ENCODE measurements at regions of chr5 and their contacts with region 1.

Region 1: DNA sequence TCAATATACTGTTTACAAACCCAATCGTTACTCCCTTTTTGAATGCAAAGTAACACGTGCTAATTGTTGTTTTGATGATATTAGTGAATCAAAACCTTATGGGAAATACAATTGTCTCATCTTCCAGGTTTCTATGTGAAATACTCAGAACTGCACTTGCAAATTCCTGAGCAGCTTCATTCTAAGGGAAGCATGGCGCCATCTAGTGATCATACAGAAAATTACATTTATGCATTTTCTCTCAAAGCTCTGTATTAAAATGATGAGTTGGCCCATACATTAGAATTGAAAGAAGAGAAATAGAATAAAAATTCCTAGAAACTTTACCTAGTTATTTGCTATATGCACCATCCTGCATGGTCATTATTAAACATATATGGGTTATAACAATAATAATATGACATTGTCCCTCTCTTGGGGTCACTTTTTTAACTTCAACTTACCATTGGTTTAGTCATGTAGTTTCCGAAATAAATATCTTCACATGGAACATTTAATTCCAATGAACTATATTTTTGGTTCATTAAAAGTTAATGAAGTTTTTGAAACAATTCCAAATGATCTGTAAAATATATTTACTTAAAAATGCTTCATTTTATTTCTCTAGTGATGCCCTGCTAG is 220.0 kb downstream of the PDE4D start:
- DNase-seq: no peak
- ATAC-seq: peak; percentile 67

Region 2: DNA sequence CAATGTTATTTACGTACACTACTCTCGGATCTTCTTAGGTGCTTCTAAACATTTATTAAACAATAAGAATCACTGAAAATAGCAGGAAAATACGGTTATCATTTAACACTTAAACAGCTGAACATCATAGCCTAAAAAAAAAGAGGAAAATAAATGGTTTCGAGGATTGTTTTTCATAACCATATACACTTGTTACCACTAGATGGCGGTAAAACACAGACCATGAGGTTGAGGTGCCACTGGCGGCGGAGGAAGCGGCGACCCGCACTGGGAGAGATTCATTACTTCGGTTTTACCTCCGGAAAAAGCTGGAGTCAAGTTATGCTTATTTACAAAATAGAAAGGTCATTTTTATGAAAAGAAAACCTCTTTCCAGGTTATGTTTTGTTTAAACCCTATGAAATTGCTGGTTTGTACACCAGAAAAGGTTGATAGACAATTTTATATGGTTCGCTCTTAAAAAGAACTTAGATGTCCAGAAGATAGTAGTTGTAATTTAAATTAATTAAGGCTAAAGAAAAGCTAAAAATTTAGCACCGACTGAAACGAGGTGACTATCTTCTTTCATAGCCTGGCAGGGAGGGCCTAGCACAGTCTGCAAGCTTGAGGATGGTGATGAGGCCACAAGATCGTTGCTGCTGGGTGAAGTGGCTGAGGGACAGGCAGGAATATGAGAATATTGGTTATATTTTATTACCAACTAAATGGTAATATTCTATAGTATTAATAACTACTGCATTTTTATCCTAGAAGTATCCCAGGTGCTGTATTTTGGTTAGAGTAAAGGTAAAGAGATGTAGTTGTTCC is 484.9 kb before region 1 on chr5:
- intact Hi-C with region 1: loop called in 1 of 2 experiments (anchors 5 kb)
- DNase-seq: peak; percentile 56 to 71
- ATAC-seq: peak; percentile 82

Region 3: DNA sequence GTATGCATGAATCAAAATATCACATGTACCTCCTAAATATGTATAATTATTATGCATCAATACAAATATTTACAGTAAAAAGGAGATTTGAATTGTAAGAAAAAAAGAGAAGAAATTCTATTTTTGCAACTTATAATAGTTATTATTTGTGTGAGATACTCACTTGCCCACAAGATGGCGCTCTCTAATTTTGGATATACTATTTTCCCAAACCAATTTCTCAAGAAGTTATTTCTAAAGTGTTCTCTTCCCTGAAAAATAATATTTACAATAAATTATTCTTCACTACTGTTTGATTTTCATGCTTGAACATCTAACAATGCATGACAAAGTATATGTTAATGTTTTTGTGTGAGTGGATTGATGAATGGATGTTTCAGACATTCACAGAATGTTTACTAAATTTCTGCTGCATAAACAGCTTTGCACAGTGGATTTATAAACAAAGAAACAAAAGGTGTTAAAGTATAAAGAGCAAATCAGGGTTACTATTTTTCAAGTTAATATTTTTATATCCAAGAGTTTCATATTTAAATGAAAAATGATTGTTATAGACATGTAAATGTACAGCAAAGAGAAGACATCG is 283.4 kb before region 1 on chr5:
- intact Hi-C with region 1: loop called in 1 of 2 experiments (anchors 5 kb)
- DNase-seq: peak in 1 of 2 donors; percentile 20
- ATAC-seq: no peak

Region 4: GRCh38 chr5:59506285-59506877 is 167.2 kb before region 1 on chr5:
- intact Hi-C with region 1: loop called in 1 of 2 experiments (anchors 5 kb)
- DNase-seq: no peak
- ATAC-seq: peak; percentile 56

Region 5: GRCh38 chr5:59786334-59786824 is 112.8 kb after region 1 on chr5:
- intact Hi-C with region 1: loop called in 1 of 2 experiments (anchors 10 kb)
- DNase-seq: no peak
- ATAC-seq: no peak

Measured in left colon (tissue), 2 donors.